Activated naive CD4-positive, alpha-beta T cell treated with anti-CD3 and anti-CD28 coated beads for 36 hours (primary cell): ENCODE measurements at regions of chr2 and their contacts with region 1.

Region 1: GRCh38 chr2:74002487-74003391 is 18.0 kb downstream of the TET3 start:
- DNase-seq: peak; percentile 39
- H3K4me3 Mint-ChIP-seq: peak overlapping the region; percentile 67
- H3K27ac Mint-ChIP-seq: peak overlapping the region; percentile 69
- H3K4me1 Mint-ChIP-seq: peaks cover 83% of the 10 kb centered on the region
- H3K27me3 Mint-ChIP-seq: no peaks in the 10 kb centered on the region

Region 2: GRCh38 chr2:72095364-72095763 is 1907.4 kb before region 1 on chr2:
- CTCF ChIA-PET with region 1: no interaction called
- intact Hi-C with region 1: no loop called
- DNase-seq: no peak
- H3K4me3 Mint-ChIP-seq: no peak overlapping the region
- H3K27ac Mint-ChIP-seq: no peak overlapping the region
- H3K4me1 Mint-ChIP-seq: no peaks in the 10 kb centered on the region
- H3K27me3 Mint-ChIP-seq: peaks cover 6% of the 10 kb centered on the region

Region 3: DNA sequence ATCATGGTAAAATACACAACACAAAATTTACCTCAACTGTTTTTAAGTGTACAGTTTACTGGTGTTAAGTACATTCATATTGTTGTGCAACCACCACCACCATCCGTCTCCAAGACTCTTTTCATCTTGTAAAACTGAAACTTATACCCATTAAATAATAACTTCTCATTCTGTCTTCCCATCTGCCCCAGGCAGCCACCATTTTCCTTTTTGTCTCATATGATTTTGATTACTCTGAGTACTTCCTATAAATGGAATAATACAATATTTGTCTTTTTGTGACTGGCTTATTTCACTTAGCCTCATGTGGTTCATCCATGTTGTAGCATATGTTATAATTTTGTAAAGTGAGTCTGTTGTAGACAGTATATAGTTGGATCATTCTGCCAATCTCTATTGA is 534.4 kb before region 1 on chr2:
- CTCF ChIA-PET with region 1: no interaction called
- intact Hi-C with region 1: no loop called
- DNase-seq: no peak
- H3K4me3 Mint-ChIP-seq: no peak overlapping the region
- H3K27ac Mint-ChIP-seq: no peak overlapping the region
- H3K4me1 Mint-ChIP-seq: no peaks in the 10 kb centered on the region
- H3K27me3 Mint-ChIP-seq: no peaks in the 10 kb centered on the region

Region 4: GRCh38 chr2:73926493-73927338 is 76.0 kb before region 1 on chr2 and contains the start of gene DGUOK:
- CTCF ChIA-PET with region 1: no interaction called
- intact Hi-C with region 1: loop called (anchors 1 kb)
- DNase-seq: peak; percentile 99
- H3K4me3 Mint-ChIP-seq: peak within 1 kb of the TSS; percentile 87
- H3K27ac Mint-ChIP-seq: peak within 1 kb of the TSS; percentile 94
- H3K4me1 Mint-ChIP-seq: peaks cover 44% of the 10 kb centered on the region
- H3K27me3 Mint-ChIP-seq: no peaks in the 10 kb centered on the region
- total RNA-seq, gene DGUOK: 112 to 115 TPM

Region 5: DNA sequence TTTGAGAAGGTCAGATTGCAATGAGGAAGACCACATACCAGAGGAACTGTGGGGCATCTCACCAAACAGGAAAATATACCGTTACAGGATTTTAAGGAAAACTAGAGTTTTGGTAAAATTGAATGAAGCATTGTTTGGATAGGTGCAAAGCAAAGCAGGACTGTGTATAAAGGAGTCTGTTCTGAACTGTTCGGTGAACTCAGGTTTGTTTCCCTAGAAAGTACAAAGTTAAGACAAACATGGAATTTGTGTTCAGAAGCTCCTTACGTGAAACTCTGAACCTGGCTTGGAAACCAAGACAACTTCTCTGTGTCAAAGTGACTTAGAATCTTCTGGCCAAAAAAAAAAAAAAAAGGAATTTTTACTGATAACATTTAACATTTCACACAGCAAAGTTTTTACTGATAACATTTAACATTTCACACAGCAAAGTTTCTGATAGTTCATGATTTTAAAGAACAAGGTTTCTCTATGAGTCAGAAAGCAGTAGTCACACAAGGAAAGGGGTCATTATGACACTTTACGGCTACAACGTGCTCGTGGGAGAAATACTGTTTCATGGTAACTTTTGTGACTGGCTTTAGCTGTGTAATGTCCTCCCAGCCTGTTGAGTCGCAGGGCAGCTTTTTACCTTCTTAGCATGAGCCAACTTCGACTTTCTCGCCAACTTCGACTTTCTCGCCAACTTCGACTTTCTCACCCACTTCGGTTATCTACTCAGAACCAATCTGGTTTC is 39.2 kb before region 1 on chr2:
- CTCF ChIA-PET with region 1: no interaction called
- intact Hi-C with region 1: loop called (anchors 1 kb)
- DNase-seq: peak; percentile 70
- H3K4me3 Mint-ChIP-seq: peak overlapping the region; percentile 38
- H3K27ac Mint-ChIP-seq: peak overlapping the region; percentile 69
- H3K4me1 Mint-ChIP-seq: peaks cover 39% of the 10 kb centered on the region
- H3K27me3 Mint-ChIP-seq: no peaks in the 10 kb centered on the region

Region 6: DNA sequence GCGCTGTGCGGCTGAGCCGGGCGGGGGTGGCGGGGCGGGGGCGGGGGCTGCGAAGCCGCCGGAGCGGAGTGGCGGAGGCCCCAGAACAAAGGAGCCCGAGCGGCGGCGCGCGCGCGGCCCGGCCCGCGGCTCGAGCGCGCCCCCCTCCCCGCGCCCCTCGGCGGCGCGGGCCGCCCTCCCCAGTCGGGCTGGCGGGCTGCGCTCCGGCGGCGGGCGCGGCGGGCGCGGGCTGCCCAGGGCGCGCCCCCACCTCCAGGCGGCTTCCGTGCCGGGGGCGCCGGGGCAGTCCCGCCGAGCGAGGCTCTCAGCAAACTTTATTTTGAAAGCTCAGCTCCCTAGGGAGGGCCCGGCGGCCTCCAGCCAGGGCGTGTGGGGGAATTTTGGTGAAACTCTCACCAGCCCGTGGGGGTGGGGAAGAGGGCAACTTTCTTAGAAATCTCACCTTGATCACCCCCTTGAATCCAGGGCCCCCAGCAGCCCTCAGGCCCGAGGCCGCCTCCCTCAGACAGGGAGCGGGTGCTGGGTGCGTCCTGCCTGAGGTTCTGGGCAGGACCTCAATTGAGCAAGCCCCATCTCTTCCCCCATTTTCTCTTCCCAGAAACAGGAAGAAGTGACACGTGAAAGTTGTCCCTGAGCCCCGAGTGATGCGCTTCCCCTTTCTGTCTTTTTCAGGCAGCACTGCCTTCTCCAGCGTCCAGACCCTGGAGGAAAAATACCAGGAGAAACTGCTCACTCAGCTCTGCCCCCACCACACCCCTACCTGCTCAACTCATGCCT is 17.2 kb before region 1 on chr2:
- CTCF ChIA-PET with region 1: interaction called, 18 read pairs
- intact Hi-C with region 1: loop called (anchors 1 kb)
- DNase-seq: peak; percentile 77
- H3K4me3 Mint-ChIP-seq: peak overlapping the region; percentile 80
- H3K27ac Mint-ChIP-seq: peak overlapping the region; percentile 90
- H3K4me1 Mint-ChIP-seq: peaks cover 64% of the 10 kb centered on the region
- H3K27me3 Mint-ChIP-seq: no peaks in the 10 kb centered on the region

Region 7: DNA sequence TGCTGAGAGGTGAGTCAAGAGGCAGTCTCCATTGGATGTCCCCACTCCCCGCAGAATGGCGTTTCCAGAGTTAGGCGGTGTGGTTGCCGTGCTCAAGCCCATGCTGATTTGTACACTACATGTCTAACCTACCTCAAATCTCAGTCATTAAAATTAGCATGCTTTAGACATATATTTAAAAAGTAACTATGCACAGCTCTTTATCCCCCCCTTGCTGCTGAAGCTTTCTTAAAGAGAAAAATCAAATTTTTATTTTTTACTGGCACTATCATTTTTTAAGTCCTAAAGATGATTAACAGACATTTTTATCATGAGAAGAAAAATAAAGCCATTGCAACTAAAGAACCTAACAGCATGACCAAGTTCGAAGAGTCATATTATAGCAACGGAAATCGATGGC is 102.1 kb after region 1 on chr2:
- CTCF ChIA-PET with region 1: no interaction called
- intact Hi-C with region 1: loop called (anchors 5 kb)
- DNase-seq: no peak
- H3K4me3 Mint-ChIP-seq: no peak overlapping the region
- H3K27ac Mint-ChIP-seq: no peak overlapping the region
- H3K4me1 Mint-ChIP-seq: no peaks in the 10 kb centered on the region
- H3K27me3 Mint-ChIP-seq: no peaks in the 10 kb centered on the region